Psoas muscle (tissue), 8 donors: ENCODE measurements at regions of chr9 and their contacts with region 1.

Region 1: DNA sequence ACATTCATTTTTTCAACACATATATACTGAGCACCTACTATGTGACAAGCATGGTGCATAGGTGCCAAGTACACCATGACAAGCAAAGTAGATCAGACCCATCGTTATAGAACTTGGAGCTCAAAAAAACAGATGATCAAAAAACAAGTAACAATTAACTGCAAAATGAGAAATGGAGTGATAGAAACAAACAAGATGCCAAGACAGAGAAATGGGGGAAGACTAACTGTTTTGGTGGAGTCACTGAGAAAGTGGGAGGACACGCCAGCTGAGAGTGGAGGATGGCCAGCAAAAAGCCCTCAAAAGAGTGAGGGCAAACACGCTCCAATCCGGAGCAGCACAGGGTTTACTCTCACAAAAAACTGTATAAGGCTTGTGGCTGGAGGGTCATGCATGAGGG is 50.6 kb downstream of the TTC39B start:
- DNase-seq: no peak
- ATAC-seq: no peak
- H3K4me3 ChIP-seq: no peak overlapping the region
- H3K27ac ChIP-seq: no peak overlapping the region
- H3K4me1 ChIP-seq: no peaks in the 10 kb centered on the region
- H3K27me3 ChIP-seq: no peaks in the 10 kb centered on the region
- CTCF ChIP-seq: no peak

Region 2: GRCh38 chr9:15293804-15294321 is 37.4 kb after region 1 on chr9:
- intact Hi-C with region 1: loop called in 1 of 2 experiments (anchors 5 kb)
- DNase-seq: no peak
- ATAC-seq: no peak
- H3K4me3 ChIP-seq: peak overlapping the region; percentile 20
- H3K27ac ChIP-seq: peak overlapping the region; percentile 11
- H3K4me1 ChIP-seq: peaks cover 16% of the 10 kb centered on the region
- H3K27me3 ChIP-seq: no peaks in the 10 kb centered on the region
- CTCF ChIP-seq: no peak